ENCODE measurements at regions of chr7 and their contacts with region 1.

Region 1: DNA sequence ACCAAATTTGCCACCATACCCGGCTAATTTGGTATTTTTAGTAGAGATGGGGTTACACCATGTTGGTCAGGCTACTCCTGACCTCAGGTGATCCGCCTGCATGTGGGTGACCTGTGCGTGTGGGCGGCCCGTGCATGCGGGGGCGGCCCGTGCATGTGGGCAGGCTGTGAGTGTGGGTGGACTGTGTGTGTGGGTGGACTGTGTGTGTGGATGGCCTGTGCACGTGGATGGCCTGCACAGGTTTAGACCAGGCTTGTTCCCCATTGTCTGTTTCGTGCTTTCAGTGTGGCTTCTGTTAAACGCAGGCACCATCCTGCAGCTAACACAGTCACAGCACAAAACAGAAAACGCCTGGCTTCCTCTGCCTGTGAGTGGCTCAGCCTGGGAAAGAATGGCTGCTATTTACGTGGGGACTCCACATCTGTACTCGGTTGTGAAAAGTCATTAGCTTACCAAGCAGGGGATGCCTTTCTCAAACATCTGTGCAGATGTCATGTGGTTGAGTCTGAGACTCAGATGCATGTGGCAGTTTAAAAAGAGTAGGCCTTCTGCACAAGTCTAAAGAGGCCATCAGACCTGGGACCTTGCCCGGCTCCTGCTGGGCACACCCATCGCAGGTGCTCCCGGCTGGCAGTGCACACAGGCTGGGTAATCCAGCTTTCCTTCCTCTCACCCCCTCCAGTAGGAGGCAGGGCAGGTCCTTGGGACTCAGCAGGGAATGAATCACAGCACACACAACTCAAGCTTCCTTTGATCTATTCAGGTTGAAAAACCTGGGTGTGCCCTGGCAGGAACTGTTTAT is 91.6 kb downstream of the COBL start:
- DNase-seq: peak; percentile 31 to 50
- H3K4me3 ChIP-seq: no peak overlapping the region
- H3K27ac ChIP-seq: no peak overlapping the region
- H3K4me1 ChIP-seq: peaks cover 5 to 16% (median 10%) of the 10 kb centered on the region in 4 experiments; a peak in 6 of 7 replicates
- H3K27me3 ChIP-seq: no peaks in the 10 kb centered on the region; a peak in 1 of 7 replicates
- CTCF ChIP-seq: peak; percentile 61 to 86 (median 72)
- EP300 ChIP-seq: no peak
- POLR2A ChIP-seq: no peak
- RAD21 ChIP-seq: peak; percentile 67 to 79

Region 2: GRCh38 chr7:51187941-51188340 is 37.1 kb before region 1 on chr7:
- CTCF ChIA-PET with region 1: interaction called, 29 read pairs
- POLR2A ChIA-PET with region 1: no interaction called
- DNase-seq: peak; percentile 50 to 82
- H3K4me3 ChIP-seq: no peak overlapping the region
- H3K27ac ChIP-seq: no peak overlapping the region
- H3K4me1 ChIP-seq: peaks cover 0 to 7% (median 4%) of the 10 kb centered on the region in 4 experiments; a peak in 4 of 7 replicates
- H3K27me3 ChIP-seq: no peaks in the 10 kb centered on the region
- CTCF ChIP-seq: peak; percentile 86 to 97 (median 90)
- EP300 ChIP-seq: no peak
- POLR2A ChIP-seq: no peak
- RAD21 ChIP-seq: peak; percentile 95

Region 3: DNA sequence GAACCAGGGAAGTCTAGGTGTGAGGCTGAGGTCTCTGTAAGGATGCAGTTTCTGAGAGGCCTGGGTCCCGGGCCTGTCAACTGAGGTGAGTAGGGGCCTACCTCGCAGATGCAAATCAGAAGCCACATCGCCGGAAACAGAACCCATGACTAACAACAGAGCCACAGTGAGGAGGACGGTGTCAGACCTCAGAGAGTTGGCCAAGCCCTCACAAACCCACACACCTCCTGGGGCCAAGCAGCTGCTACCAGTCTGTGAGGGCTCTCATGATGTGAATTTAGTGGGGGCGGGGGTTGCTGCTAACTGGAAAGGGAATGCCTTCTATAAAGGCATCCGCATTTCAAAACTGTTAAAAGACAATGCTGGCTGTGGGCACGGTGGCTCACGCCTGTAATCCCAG is 11.4 kb before region 1 on chr7:
- CTCF ChIA-PET with region 1: interaction called, 24 read pairs
- POLR2A ChIA-PET with region 1: interaction called, 3 read pairs
- DNase-seq: no peak
- H3K4me3 ChIP-seq: no peak overlapping the region
- H3K27ac ChIP-seq: no peak overlapping the region
- H3K4me1 ChIP-seq: peaks cover 1 to 14% (median 9%) of the 10 kb centered on the region in 4 experiments; a peak in 4 of 7 replicates
- H3K27me3 ChIP-seq: 0 out of 7 replicates have a peak, but pooled peaks cover 0 to 4% (median 0%) of the 10 kb centered on the region in 4 experiments
- CTCF ChIP-seq: no peak
- EP300 ChIP-seq: no peak
- POLR2A ChIP-seq: no peak
- RAD21 ChIP-seq: no peak

Region 4: GRCh38 chr7:51236470-51237132 is 11.6 kb after region 1 on chr7:
- CTCF ChIA-PET with region 1: interaction called, 12 read pairs
- POLR2A ChIA-PET with region 1: interaction called, 7 read pairs
- DNase-seq: no peak
- H3K4me3 ChIP-seq: no peak overlapping the region
- H3K27ac ChIP-seq: no peak overlapping the region
- H3K4me1 ChIP-seq: peaks cover 0 to 7% (median 5%) of the 10 kb centered on the region in 4 experiments; a peak in 5 of 7 replicates
- H3K27me3 ChIP-seq: no peaks in the 10 kb centered on the region
- CTCF ChIP-seq: no peak
- EP300 ChIP-seq: no peak
- POLR2A ChIP-seq: no peak
- RAD21 ChIP-seq: no peak

Region 5: GRCh38 chr7:51242007-51242691 is 17.1 kb after region 1 on chr7:
- CTCF ChIA-PET with region 1: interaction called, 10 read pairs
- POLR2A ChIA-PET with region 1: interaction called, 7 read pairs
- DNase-seq: peak in 1 of 2 experiments; percentile 30
- H3K4me3 ChIP-seq: no peak overlapping the region
- H3K27ac ChIP-seq: no peak overlapping the region
- H3K4me1 ChIP-seq: peaks cover 0 to 13% (median 3%) of the 10 kb centered on the region in 4 experiments; a peak in 4 of 7 replicates
- H3K27me3 ChIP-seq: no peaks in the 10 kb centered on the region
- CTCF ChIP-seq: no peak
- EP300 ChIP-seq: no peak
- POLR2A ChIP-seq: no peak
- RAD21 ChIP-seq: no peak

Region 6: DNA sequence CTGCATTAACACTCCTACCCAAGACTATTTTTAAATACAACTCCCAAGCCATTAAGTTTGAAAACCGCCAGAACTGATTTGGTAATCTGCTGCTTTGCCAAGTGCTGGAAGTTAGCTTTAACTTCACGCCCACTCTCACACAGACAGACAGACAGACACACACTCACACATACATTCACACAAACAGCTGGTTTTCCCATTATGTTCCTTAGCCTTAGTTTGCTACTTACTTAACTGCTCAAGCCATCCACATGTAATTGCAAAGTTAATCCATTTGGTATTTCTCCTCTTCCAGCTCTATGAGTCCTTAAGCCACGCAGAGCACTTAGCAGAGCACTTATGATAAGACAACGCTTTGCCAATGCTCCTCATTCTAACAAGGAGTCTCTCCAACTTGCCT is 83.3 kb after region 1 on chr7:
- CTCF ChIA-PET with region 1: interaction called, 20 read pairs
- POLR2A ChIA-PET with region 1: interaction called, 3 read pairs
- DNase-seq: no peak
- H3K4me3 ChIP-seq: no peak overlapping the region
- H3K27ac ChIP-seq: no peak overlapping the region
- H3K4me1 ChIP-seq: peaks cover 4 to 15% (median 10%) of the 10 kb centered on the region in 4 experiments; a peak in 6 of 7 replicates
- H3K27me3 ChIP-seq: no peaks in the 10 kb centered on the region
- CTCF ChIP-seq: no peak
- EP300 ChIP-seq: no peak
- POLR2A ChIP-seq: no peak
- RAD21 ChIP-seq: no peak

Region 7: DNA sequence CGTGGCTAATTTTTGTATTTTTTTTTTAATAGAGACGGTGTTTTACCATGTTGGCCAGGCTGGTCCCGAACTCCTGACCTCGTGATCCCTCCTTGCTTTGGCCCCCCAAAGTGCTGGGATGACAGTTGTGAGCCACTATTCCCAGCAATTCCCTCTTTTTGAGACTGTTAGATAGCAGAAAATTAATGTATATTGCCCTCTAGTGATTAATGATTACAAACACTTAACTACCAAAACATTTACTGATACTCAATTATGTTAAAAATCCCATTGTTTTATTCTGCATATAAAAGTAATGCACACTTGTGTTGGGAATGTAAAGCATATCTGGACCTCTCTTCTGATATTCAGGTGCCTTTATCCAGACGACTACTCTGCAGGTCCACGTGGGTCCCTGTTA is 132.8 kb after region 1 on chr7:
- CTCF ChIA-PET with region 1: interaction called, 16 read pairs
- POLR2A ChIA-PET with region 1: no interaction called
- DNase-seq: no peak
- H3K4me3 ChIP-seq: no peak overlapping the region
- H3K27ac ChIP-seq: no peak overlapping the region
- H3K4me1 ChIP-seq: peaks cover 0 to 5% (median 0%) of the 10 kb centered on the region in 4 experiments; a peak in 4 of 7 replicates
- H3K27me3 ChIP-seq: no peaks in the 10 kb centered on the region
- CTCF ChIP-seq: no peak
- EP300 ChIP-seq: no peak
- POLR2A ChIP-seq: no peak
- RAD21 ChIP-seq: no peak

Measured in H1 (cell line).